Transverse colon (tissue), 4 donors: ENCODE measurements at regions of chr11 and their contacts with region 1.

Region 1: DNA sequence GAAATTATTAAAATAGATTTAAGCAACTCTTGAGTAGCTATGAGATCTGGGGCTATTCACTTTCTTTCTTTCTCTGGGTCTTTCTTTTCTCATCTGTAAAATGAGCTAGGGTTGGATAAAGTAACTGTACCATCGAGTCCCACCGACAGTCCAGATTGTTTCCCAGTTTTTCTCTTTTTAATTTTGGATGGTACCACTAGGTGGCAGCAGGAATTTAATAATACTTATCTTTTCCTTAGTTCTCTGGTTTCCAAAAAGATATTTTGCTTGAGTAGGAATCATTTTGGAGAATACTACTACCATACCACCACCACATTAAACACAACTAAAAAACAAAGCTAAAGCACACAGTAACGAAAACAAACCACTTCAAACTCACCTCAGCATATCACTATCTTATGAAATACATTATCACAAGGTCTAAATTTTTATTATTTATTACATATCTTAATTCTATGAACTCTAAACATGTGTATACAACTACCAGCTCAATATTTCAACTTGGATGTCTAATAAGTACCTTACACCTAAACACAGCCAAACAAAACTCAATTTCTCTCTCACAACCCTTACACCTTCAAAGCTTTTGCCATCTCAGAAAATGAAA is 584.0 kb downstream of the KCNA4 start:
- DNase-seq: no peak
- H3K4me3 ChIP-seq: no peak overlapping the region
- H3K27ac ChIP-seq: no peak overlapping the region
- H3K4me1 ChIP-seq: no peaks in the 10 kb centered on the region
- H3K27me3 ChIP-seq: no peaks in the 10 kb centered on the region
- CTCF ChIP-seq: peak in 3 of 5 experiments; percentile 23 to 33 (median 31)
- EP300 ChIP-seq: no peak
- POLR2A ChIP-seq: no peak

Region 2: DNA sequence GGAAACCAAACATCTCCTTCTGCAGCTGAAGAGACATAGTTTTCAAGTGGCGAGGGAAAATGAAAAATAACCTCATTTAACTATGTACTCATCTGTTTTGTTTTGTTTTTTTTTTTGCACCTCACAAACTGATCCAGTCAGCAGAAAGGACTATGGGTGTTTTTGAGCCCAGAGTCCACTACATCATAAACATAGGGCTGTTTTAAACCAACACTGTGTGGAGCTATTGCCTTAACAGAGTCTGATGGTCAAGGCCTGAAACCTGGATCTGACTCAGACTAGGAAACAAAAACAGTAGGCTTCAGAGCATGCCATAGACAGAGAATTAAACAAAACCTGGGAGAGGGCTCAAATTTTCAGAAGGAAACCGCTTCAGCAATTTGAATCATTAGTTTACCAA is 698.7 kb after region 1 on chr11:
- in situ Hi-C with region 1: no loop called
- intact Hi-C with region 1: loop called (anchors 5 kb)
- DNase-seq: no peak
- H3K4me3 ChIP-seq: no peak overlapping the region
- H3K27ac ChIP-seq: no peak overlapping the region
- H3K4me1 ChIP-seq: no peaks in the 10 kb centered on the region
- H3K27me3 ChIP-seq: no peaks in the 10 kb centered on the region
- CTCF ChIP-seq: no peak
- EP300 ChIP-seq: no peak
- POLR2A ChIP-seq: no peak